ENCODE measurements at regions of chr1 and their contacts with region 1.

Region 1: GRCh38 chr1:25204797-25205480 is 27.4 kb downstream of the SYF2 start:
- DNase-seq: peak in 4 of 7 donors; percentile 22 to 49 (median 31)
- H3K4me3 ChIP-seq: no peak overlapping the region
- H3K27ac ChIP-seq: no peak overlapping the region
- H3K4me1 ChIP-seq: no peaks in the 10 kb centered on the region
- H3K27me3 ChIP-seq: no peaks in the 10 kb centered on the region
- CTCF ChIP-seq: peak; percentile 48 to 84 (median 66)
- POLR2A ChIP-seq: no peak

Region 2: DNA sequence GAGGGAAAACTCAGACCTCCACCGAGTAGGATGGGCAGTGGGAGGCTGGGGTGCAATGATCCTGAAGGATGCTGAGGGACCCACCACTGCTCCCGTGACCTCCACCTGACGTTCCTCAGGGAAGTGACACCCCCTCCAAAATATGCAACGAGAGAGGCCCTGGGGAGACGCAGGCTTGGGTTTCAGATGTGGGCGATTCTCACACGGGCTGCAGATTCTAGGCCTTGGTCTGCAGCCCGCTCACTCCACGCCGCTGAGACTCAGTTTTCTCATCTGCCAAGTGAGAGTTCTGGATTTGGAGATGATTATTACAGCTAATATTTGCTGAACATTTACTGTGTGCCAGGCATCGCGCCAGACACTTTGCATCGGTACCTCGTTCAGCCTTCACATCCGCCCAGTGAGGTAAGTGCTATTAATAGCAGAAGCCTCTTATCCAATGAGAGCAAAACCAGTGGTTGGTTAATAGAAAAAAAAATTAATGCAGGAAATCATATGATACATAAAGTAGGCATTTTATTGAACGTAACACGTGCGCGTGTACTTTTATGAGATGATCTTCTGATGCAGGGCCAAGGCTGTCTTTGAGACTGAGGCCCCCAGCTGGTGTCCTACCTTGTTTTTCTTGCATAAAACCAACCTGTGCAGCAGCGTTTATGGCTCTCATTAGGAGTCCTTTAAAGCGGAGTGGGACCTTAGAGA is 172.8 kb before region 1 on chr1:
- intact Hi-C with region 1: loop called in 1 of 2 experiments (anchors 5 kb)
- DNase-seq: no peak
- H3K4me3 ChIP-seq: no peak overlapping the region
- H3K27ac ChIP-seq: no peak overlapping the region
- H3K4me1 ChIP-seq: no peaks in the 10 kb centered on the region
- H3K27me3 ChIP-seq: no peaks in the 10 kb centered on the region
- CTCF ChIP-seq: no peak
- POLR2A ChIP-seq: no peak